ENCODE measurements at regions of chr20 and their contacts with region 1.

Region 1: DNA sequence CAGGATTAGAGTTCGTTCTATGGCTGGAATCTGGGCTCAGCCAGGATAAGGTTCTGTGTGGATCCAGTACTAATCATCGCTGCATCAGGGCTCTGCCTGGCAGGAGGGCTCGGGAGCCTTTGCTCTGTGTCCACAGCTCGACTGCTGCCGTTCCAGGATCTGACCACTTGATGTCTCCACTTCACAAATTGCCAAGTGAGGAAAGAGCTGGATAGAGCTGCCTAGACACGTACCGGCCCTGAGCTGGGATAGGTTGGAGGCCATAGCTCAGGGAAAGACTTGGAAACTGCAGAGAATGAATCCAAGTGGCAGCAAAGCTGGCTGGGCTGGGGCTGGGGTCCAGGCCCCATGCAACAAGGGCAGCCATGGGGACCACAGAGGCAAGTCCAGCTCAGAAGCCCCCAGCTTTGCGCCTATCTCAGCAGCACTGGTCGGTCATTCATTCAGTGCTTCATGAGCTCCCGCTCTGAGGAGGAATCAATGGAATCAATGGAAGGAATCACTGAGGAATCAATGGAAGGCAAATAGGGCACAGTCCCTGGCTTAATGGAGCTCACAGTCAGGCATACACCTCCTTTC is 38.0 kb upstream of the TOP1 start:
- DNase-seq: peak; percentile 86
- H3K4me3 Mint-ChIP-seq: no peak overlapping the region
- H3K27ac Mint-ChIP-seq: peak overlapping the region; percentile 24
- H3K4me1 Mint-ChIP-seq: peaks cover 26% of the 10 kb centered on the region
- H3K27me3 Mint-ChIP-seq: no peaks in the 10 kb centered on the region

Region 2: GRCh38 chr20:40980106-40980827 is 10.4 kb before region 1 on chr20:
- CTCF ChIA-PET with region 1: interaction called, 11 read pairs
- POLR2A ChIA-PET with region 1: no interaction called
- intact Hi-C with region 1: no loop called
- DNase-seq: no peak
- H3K4me3 Mint-ChIP-seq: no peak overlapping the region
- H3K27ac Mint-ChIP-seq: no peak overlapping the region
- H3K4me1 Mint-ChIP-seq: no peaks in the 10 kb centered on the region
- H3K27me3 Mint-ChIP-seq: peaks cover 11% of the 10 kb centered on the region

Region 3: DNA sequence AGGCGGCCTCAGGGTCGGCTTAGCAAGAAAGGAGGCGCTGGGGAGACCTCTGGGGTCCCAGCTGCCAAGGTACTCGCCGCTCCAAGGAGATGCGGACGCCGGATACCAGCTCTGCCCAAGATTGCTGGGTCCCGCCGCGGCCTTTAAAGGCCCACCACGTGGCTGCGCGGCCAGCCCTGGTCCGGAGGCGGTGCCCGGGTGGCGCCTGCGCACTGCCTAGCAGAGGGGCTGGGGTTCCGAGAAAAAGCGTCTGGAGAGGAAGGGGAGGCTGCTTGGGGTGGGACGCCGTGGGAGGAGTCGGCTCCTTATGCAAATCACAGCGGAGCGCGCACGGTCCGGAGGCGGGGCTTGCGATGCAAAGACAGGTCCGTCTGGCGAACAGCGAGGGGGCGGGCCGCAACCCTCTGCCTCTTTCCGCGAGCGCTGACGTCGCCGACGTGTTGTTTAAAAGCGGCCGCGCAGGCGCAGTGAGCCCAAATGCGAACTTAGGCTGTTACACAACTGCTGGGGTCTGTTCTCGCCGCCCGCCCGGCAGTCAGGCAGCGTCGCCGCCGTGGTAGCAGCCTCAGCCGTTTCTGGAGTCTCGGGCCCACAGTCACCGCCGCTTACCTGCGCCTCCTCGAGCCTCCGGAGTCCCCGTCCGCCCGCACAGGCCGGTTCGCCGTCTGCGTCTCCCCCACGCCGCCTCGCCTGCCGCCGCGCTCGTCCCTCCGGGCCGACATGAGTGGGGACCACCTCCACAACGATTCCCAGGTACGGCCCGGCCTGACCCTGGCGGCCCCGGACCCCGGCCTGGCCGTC is 37.9 kb after region 1 on chr20 and contains the start of gene TOP1:
- CTCF ChIA-PET with region 1: interaction called, 32 read pairs
- POLR2A ChIA-PET with region 1: no interaction called
- intact Hi-C with region 1: loop called (anchors 1 kb)
- DNase-seq: peak; percentile 100
- H3K4me3 Mint-ChIP-seq: peak within 1 kb of the TSS; percentile 85
- H3K27ac Mint-ChIP-seq: peak within 1 kb of the TSS; percentile 89
- H3K4me1 Mint-ChIP-seq: peaks cover 47% of the 10 kb centered on the region
- H3K27me3 Mint-ChIP-seq: no peaks in the 10 kb centered on the region
- total RNA-seq, gene TOP1: 128 TPM

Region 4: DNA sequence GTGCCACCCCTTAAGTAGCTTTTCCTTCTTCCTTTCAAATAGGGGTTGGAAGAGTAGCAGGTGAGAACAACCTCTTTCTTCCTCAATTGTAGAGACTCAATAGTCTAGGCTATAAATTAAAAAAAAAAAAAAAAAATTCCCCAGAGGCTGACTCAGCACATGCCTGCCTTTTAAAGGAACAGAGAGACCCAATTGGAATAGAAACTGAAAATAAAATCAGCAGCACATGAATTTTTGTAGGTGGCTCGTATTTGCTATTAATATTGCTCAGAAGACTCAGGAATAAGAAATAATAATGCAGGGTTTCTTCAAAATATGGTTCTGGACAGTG is 57.3 kb after region 1 on chr20:
- CTCF ChIA-PET with region 1: interaction called, 20 read pairs
- POLR2A ChIA-PET with region 1: interaction called, 3 read pairs
- intact Hi-C with region 1: no loop called
- DNase-seq: no peak
- H3K4me3 Mint-ChIP-seq: peak overlapping the region; percentile 76
- H3K27ac Mint-ChIP-seq: peak overlapping the region; percentile 87
- H3K4me1 Mint-ChIP-seq: peaks cover 93% of the 10 kb centered on the region
- H3K27me3 Mint-ChIP-seq: no peaks in the 10 kb centered on the region

Region 5: GRCh38 chr20:41063438-41063837 is 72.8 kb after region 1 on chr20:
- CTCF ChIA-PET with region 1: interaction called, 19 read pairs
- POLR2A ChIA-PET with region 1: no interaction called
- intact Hi-C with region 1: no loop called
- DNase-seq: no peak
- H3K4me3 Mint-ChIP-seq: no peak overlapping the region
- H3K27ac Mint-ChIP-seq: no peak overlapping the region
- H3K4me1 Mint-ChIP-seq: peaks cover 51% of the 10 kb centered on the region
- H3K27me3 Mint-ChIP-seq: no peaks in the 10 kb centered on the region

Region 6: DNA sequence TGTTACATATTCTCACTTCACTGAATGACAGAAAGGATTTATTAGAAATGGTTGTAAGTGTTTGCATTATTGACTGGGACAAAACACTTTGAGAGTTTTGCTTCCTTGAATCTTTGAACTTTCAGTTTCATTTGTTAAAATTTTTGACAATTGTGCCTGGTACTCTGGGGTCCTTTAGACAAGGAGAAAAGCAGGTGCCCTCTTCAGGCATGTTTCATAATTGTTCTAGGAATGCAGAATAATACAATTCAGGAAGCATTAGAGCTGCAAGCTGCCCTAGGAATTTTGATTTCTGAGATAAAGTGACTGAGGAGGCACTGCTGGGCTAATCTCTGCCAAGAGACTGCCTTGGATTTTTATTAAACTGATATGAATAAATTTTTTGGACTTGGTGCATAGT is 87.7 kb after region 1 on chr20:
- CTCF ChIA-PET with region 1: interaction called, 19 read pairs
- POLR2A ChIA-PET with region 1: no interaction called
- intact Hi-C with region 1: loop called (anchors 5 kb)
- DNase-seq: no peak
- H3K4me3 Mint-ChIP-seq: no peak overlapping the region
- H3K27ac Mint-ChIP-seq: peak overlapping the region; percentile 50
- H3K4me1 Mint-ChIP-seq: peaks cover 54% of the 10 kb centered on the region
- H3K27me3 Mint-ChIP-seq: no peaks in the 10 kb centered on the region

Measured in activated CD4-positive, alpha-beta memory T cell treated with anti-CD3 and anti-CD28 coated beads for 36 hours (primary cell).